ENCODE measurements at regions of chr1 and their contacts with region 1.

Region 1: GRCh38 chr1:8848663-8849386 is 29.7 kb downstream of the ENO1 start:
- DNase-seq: peak; percentile 94
- H3K4me3 ChIP-seq: no peak overlapping the region
- H3K27ac ChIP-seq: no peak overlapping the region
- H3K4me1 ChIP-seq: peaks cover 4% of the 10 kb centered on the region
- H3K27me3 ChIP-seq: no peaks in the 10 kb centered on the region
- CTCF ChIP-seq: peak; percentile 85 to 99
- POLR2A ChIP-seq: no peak

Region 2: DNA sequence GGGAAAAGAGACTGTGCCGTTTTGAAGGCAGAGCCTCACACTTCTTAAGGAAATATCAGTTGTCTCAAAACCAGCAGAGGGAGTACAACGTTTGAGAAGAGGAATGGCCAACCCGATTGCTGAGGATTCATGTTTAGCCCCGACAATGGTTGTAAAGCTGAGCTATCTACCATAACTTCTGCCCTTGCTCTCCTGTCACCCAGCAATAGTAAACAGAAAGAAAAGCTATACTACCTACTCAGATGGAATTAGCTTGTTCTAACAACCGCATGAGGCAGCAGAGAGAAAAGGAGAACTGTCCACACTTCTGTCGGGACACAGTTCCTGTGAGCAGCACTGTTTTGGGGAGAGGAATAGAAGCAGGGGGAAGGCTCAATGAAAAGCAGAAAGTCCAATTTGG is 439.7 kb before region 1 on chr1:
- CTCF ChIA-PET with region 1: interaction called, 16 read pairs
- POLR2A ChIA-PET with region 1: no interaction called
- dilution Hi-C with region 1: no loop called
- intact Hi-C with region 1: no loop called
- DNase-seq: peak; percentile 76
- H3K4me3 ChIP-seq: no peak overlapping the region
- H3K27ac ChIP-seq: peak overlapping the region; percentile 62
- H3K4me1 ChIP-seq: peaks cover 53% of the 10 kb centered on the region
- H3K27me3 ChIP-seq: no peaks in the 10 kb centered on the region
- CTCF ChIP-seq: peak; percentile 37 to 42
- POLR2A ChIP-seq: no peak

Region 3: DNA sequence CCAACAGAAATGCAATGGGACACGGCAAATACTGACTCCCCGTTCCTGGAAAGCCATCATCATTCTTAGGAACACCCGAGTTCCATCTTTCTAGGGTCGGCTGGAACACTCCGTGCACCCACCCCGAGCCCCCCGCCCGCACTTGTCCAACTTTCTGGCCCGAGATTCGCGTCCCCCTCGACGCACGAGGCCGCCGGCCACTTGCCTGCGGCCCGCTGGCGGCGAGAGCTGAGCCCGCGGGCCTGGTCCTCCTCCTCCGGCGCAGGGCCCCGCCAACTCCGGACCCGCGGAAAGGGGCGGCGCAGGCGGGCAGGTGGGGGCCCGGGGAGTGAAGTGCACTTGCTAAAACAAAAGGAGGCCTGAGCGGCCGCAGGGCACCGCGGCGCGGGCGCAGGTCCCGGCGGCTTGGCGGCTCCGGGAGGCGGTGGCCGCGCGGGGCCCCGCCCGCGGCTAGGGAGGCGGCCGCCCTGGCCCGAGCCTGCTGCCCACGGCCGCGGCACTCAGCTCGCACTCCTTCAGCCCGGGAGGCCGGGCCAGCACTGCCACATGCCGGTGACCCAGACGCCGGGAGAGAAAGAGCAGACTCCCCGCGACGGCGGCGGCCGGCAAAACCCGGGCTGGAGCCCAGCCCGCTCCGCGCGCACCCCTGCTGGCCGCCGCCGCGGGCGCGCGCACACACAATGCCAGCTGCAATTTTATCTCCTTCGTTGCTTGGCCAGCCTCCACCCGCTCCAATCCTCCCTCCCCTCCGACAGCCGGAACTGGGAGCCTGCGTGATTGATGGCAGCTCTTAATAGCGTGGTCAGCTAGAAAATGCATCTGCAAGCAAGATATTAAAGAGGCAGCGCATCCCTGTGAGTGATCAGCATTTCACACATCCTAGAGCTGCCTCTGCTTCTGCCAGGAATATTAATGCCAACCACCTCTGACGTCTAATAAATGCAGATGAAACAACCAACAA is 145.7 kb before region 1 on chr1:
- CTCF ChIA-PET with region 1: interaction called, 29 read pairs
- POLR2A ChIA-PET with region 1: no interaction called
- dilution Hi-C with region 1: no loop called
- intact Hi-C with region 1: no loop called
- DNase-seq: peak; percentile 96
- H3K4me3 ChIP-seq: peak overlapping the region; percentile 61 to 94 (median 80)
- H3K27ac ChIP-seq: peak overlapping the region; percentile 77
- H3K4me1 ChIP-seq: peaks cover 17% of the 10 kb centered on the region
- H3K27me3 ChIP-seq: no peaks in the 10 kb centered on the region
- CTCF ChIP-seq: peak in 1 of 2 donors; percentile 20
- POLR2A ChIP-seq: peak; percentile 95

Region 4: DNA sequence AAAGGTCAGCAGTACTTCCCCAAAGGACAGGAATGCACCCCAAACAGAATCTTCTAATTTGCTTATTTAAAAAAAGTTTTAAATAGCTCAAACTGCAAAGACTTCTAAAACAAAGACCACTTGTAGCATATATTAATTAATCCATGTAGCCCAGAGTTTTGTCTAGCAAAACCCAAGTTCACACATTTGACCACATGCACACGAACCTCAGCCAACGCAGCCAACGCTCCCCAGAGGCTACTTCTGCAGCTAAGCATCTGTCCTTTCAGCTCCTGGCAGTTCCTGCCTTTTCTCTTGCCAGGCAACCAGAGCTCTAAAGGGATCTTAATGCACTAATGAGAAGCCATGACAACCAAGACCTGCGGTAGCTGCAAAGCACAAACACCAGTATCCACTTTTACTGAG is 121.0 kb before region 1 on chr1:
- CTCF ChIA-PET with region 1: interaction called, 140 read pairs
- POLR2A ChIA-PET with region 1: no interaction called
- dilution Hi-C with region 1: no loop called
- intact Hi-C with region 1: no loop called
- DNase-seq: no peak
- H3K4me3 ChIP-seq: no peak overlapping the region
- H3K27ac ChIP-seq: no peak overlapping the region
- H3K4me1 ChIP-seq: no peaks in the 10 kb centered on the region
- H3K27me3 ChIP-seq: no peaks in the 10 kb centered on the region
- CTCF ChIP-seq: no peak
- POLR2A ChIP-seq: no peak

Region 5: DNA sequence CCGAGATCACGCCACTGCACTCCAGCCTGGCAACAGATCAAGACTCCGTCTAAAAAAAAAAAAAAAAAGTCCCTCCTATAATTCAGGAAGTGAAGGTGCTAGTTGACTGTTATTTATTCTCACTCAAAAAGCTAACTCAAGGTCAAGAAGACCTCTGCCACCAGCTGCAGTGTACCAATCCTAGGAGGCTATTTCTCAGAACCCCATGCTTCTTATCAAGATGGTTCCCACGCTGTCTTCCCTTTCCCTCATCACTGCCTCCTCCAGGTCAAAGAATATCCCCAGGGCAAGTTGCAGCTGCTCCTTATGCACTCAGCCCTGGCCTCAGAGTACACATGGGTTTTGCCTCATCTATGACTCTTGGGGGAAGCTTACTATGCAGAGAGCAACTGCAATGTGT is 84.9 kb before region 1 on chr1:
- CTCF ChIA-PET with region 1: interaction called, 14 read pairs
- POLR2A ChIA-PET with region 1: no interaction called
- dilution Hi-C with region 1: no loop called
- intact Hi-C with region 1: no loop called
- DNase-seq: peak; percentile 13
- H3K4me3 ChIP-seq: no peak overlapping the region
- H3K27ac ChIP-seq: no peak overlapping the region
- H3K4me1 ChIP-seq: peaks cover 11% of the 10 kb centered on the region
- H3K27me3 ChIP-seq: no peaks in the 10 kb centered on the region
- CTCF ChIP-seq: no peak
- POLR2A ChIP-seq: no peak

Region 6: GRCh38 chr1:8825985-8826481 is 22.8 kb before region 1 on chr1:
- CTCF ChIA-PET with region 1: interaction called, 40 read pairs
- POLR2A ChIA-PET with region 1: no interaction called
- dilution Hi-C with region 1: no loop called
- intact Hi-C with region 1: no loop called
- DNase-seq: peak; percentile 12
- H3K4me3 ChIP-seq: no peak overlapping the region
- H3K27ac ChIP-seq: no peak overlapping the region
- H3K4me1 ChIP-seq: peaks cover 21% of the 10 kb centered on the region
- H3K27me3 ChIP-seq: no peaks in the 10 kb centered on the region
- CTCF ChIP-seq: no peak
- POLR2A ChIP-seq: no peak

Region 7: DNA sequence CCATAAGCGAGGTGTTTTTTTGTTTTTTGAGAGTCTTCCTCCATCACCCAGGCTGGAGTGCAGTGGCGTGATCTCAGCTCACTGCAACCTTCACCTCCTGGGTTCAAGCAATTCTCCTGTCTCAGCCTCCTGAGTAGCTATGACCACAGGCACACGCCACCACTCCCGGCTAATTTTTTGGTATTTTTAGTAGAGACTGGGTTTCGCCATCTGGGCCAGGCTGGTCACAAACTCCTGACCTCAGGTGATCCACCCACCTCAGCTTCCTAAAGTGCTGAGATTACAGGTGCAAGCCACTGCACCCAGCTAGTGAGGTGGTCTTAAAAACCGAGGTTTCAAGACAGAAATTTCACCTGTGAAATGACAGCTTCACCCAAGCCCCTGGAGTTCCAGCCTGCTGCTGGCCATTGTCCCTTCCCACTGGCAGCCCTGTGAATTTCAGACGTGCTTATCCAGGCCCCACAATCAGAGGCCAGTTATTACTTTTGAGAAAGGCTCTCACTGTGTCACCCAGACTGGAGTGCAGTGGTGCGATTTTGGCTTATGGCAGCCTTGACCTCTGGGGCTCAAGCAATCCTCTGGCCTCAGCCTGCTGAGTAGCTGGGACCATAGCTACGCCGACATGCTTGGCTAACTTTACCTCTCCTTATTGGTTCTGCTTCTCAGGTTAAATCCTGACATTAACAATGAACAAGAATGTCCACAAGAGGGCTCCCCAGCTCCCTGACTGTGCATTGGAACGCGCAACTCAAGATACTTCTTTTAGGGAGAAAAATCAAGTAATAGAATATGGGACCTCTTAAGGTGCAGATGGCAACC is 10.3 kb after region 1 on chr1:
- CTCF ChIA-PET with region 1: interaction called, 56 read pairs
- POLR2A ChIA-PET with region 1: no interaction called
- dilution Hi-C with region 1: no loop called
- intact Hi-C with region 1: loop called (anchors 1 kb)
- DNase-seq: peak; percentile 83
- H3K4me3 ChIP-seq: no peak overlapping the region
- H3K27ac ChIP-seq: peak overlapping the region; percentile 80
- H3K4me1 ChIP-seq: peaks cover 36% of the 10 kb centered on the region
- H3K27me3 ChIP-seq: no peaks in the 10 kb centered on the region
- CTCF ChIP-seq: peak; percentile 65
- POLR2A ChIP-seq: peak; percentile 33

Region 8: GRCh38 chr1:8889925-8890785 is 41.3 kb after region 1 on chr1:
- CTCF ChIA-PET with region 1: no interaction called
- POLR2A ChIA-PET with region 1: no interaction called
- dilution Hi-C with region 1: no loop called
- intact Hi-C with region 1: no loop called
- DNase-seq: no peak
- H3K4me3 ChIP-seq: no peak overlapping the region
- H3K27ac ChIP-seq: no peak overlapping the region
- H3K4me1 ChIP-seq: no peaks in the 10 kb centered on the region
- H3K27me3 ChIP-seq: peaks cover 0 to 3% of the 10 kb centered on the region in 2 experiments
- CTCF ChIP-seq: no peak
- POLR2A ChIP-seq: no peak